Left colon (tissue), 2 donors: ENCODE measurements at regions of chr15 and their contacts with region 1.

Region 1: DNA sequence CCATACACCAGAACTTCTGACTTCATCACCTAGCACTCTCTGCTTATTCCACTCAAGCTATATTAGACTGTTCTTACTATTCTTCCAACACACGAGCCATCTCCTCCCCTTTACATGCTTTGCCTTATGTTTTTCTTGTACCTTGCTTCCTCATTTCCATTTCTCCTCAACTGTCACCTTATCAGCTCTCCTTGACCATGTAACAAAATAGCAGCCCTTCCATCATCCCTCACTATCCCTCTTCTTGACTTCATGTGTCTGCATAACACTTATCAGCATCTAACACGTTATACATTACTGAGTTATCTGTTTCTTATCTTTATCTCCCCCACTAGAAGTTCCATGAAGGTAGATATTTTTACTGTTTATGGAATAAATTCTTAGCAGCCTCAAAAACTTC is 45.3 kb downstream of the TRPM7 start:
- DNase-seq: no peak
- ATAC-seq: no peak

Region 2: GRCh38 chr15:50590288-50590687 is 51.0 kb before region 1 on chr15:
- intact Hi-C with region 1: loop called in 1 of 2 experiments (anchors 10 kb)
- DNase-seq: no peak
- ATAC-seq: no peak